Naive thymus-derived CD4-positive, alpha-beta T cell (primary cell): ENCODE measurements at regions of chr15 and their contacts with region 1.

Region 1: GRCh38 chr15:72783563-72784237 is at the start of gene ADPGK:
- DNase-seq: peak; percentile 90 to 100 (median 97)
- ATAC-seq: peak; percentile 90
- H3K4me3 ChIP-seq: peak within 1 kb of the TSS; percentile 87
- H3K4me3 Mint-ChIP-seq: peak within 1 kb of the TSS; percentile 87 to 98 (median 95)
- H3K27ac ChIP-seq: peak within 1 kb of the TSS; percentile 89
- H3K27ac Mint-ChIP-seq: peak within 1 kb of the TSS; percentile 95 to 99 (median 98)
- H3K4me1 ChIP-seq: peaks cover 19 to 39% of the 10 kb centered on the region in 2 donors
- H3K4me1 Mint-ChIP-seq: peaks cover 31 to 56% (median 49%) of the 10 kb centered on the region in 7 donors
- H3K27me3 ChIP-seq: no peaks in the 10 kb centered on the region
- H3K27me3 Mint-ChIP-seq: no peaks in the 10 kb centered on the region
- total RNA-seq, gene ADPGK: 96.2 to 129 (median 98.2) TPM

Region 2: GRCh38 chr15:72117486-72118399 is 666.0 kb before region 1 on chr15 and contains the start of gene MYO9A:
- CTCF ChIA-PET with region 1: no interaction called
- POLR2A ChIA-PET with region 1: no interaction called
- intact Hi-C with region 1: loop called in 1 of 2 experiments (anchors 1 kb)
- DNase-seq: peak; percentile 93 to 99 (median 98)
- ATAC-seq: peak; percentile 90
- H3K4me3 ChIP-seq: peak within 1 kb of the TSS; percentile 86
- H3K4me3 Mint-ChIP-seq: peak within 1 kb of the TSS; percentile 89 to 99 (median 97)
- H3K27ac ChIP-seq: peak within 1 kb of the TSS; percentile 94
- H3K27ac Mint-ChIP-seq: peak within 1 kb of the TSS; percentile 81 to 99 (median 99)
- H3K4me1 ChIP-seq: peaks cover 7 to 11% of the 10 kb centered on the region in 2 donors
- H3K4me1 Mint-ChIP-seq: peaks cover 23 to 55% (median 47%) of the 10 kb centered on the region in 7 donors
- H3K27me3 ChIP-seq: no peaks in the 10 kb centered on the region
- H3K27me3 Mint-ChIP-seq: peaks cover 0 to 23% (median 0%) of the 10 kb centered on the region in 5 donors
- total RNA-seq, gene MYO9A: 21.6 to 53.3 (median 29.7) TPM

Region 3: DNA sequence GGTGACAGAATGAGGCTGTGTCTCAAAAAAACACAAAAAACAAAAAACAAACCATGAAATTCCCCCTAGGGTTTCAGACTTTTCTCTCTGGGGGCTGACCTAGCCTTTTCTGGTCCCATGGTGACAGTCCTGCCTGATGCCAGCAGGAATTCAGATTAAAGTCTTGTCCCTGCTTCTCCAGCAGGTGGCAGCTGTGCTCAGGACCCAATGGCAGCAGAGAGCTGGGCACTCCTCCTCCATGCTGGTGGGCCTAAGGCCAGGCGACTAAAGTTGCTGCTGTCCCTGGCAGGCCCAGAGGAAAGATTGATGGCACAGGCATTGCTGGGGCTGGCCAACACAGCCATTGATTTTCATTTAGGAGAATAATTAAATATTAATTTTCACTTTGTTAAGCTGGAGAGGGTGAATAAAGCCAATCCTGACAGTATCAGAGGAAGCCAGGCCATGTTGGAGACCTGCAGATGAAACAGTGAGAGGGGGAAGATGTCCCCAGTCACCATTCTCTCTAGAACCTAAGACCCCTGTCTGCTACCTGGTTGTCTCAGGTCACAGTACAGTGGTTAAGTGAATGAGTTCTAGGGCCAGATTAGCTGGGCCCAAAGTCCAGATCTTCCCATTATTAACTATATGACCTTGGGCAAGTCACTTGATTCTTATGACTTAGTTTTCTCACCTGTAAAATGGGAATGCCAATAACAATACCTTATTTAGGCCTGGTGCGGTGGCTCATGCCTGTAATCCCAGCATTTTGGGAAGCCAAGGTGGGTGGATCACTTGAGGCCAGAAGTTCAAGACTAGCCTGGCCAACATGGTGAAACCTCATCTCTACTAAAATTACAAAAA is 470.9 kb before region 1 on chr15:
- CTCF ChIA-PET with region 1: no interaction called
- POLR2A ChIA-PET with region 1: no interaction called
- intact Hi-C with region 1: loop called in 1 of 2 experiments (anchors 10 kb)
- DNase-seq: peak; percentile 22 to 54 (median 43)
- ATAC-seq: peak; percentile 93
- H3K4me3 ChIP-seq: no peak overlapping the region
- H3K4me3 Mint-ChIP-seq: no peak overlapping the region
- H3K27ac ChIP-seq: no peak overlapping the region
- H3K27ac Mint-ChIP-seq: no peak overlapping the region
- H3K4me1 ChIP-seq: no peaks in the 10 kb centered on the region
- H3K4me1 Mint-ChIP-seq: peaks cover 0 to 2% (median 0%) of the 10 kb centered on the region in 7 donors
- H3K27me3 ChIP-seq: no peaks in the 10 kb centered on the region
- H3K27me3 Mint-ChIP-seq: peaks cover 0 to 7% (median 0%) of the 10 kb centered on the region in 5 donors

Region 4: GRCh38 chr15:72685925-72686794 is 97.5 kb before region 1 on chr15 and contains the starts of genes BBS4 and HIGD2B:
- CTCF ChIA-PET with region 1: no interaction called
- POLR2A ChIA-PET with region 1: interaction called, 3 read pairs
- intact Hi-C with region 1: loop called (anchors 1 kb)
- DNase-seq: peak; percentile 67 to 88 (median 84)
- ATAC-seq: peak; percentile 97
- H3K4me3 ChIP-seq: peak within 1 kb of the TSS; percentile 99
- H3K4me3 Mint-ChIP-seq: peak within 1 kb of the TSS; percentile 93 to 99 (median 98)
- H3K27ac ChIP-seq: peak within 1 kb of the TSS; percentile 82
- H3K27ac Mint-ChIP-seq: peak within 1 kb of the TSS; percentile 91 to 98 (median 96)
- H3K4me1 ChIP-seq: peaks cover 0 to 5% of the 10 kb centered on the region in 2 donors
- H3K4me1 Mint-ChIP-seq: peaks cover 8 to 25% (median 20%) of the 10 kb centered on the region in 7 donors
- H3K27me3 ChIP-seq: no peaks in the 10 kb centered on the region
- H3K27me3 Mint-ChIP-seq: peaks cover 0 to under 1% (median 0%) of the 10 kb centered on the region in 5 donors
- total RNA-seq, gene BBS4: 11.9 to 26.5 (median 16.2) TPM
- total RNA-seq, gene HIGD2B: 0.57 to 0.69 (median 0.64) TPM in 3 of 5 experiments, not detected in the others

Region 5: GRCh38 chr15:73051811-73052678 is 268.3 kb after region 1 on chr15 and contains the start of gene NEO1:
- CTCF ChIA-PET with region 1: no interaction called
- POLR2A ChIA-PET with region 1: interaction called, 10 read pairs
- intact Hi-C with region 1: loop called (anchors 1 to 2 kb)
- DNase-seq: peak; percentile 71 to 86 (median 84)
- ATAC-seq: peak; percentile 90
- H3K4me3 ChIP-seq: peak within 1 kb of the TSS; percentile 74
- H3K4me3 Mint-ChIP-seq: peak within 1 kb of the TSS; percentile 81 to 95 (median 88)
- H3K27ac ChIP-seq: peak within 1 kb of the TSS; percentile 74
- H3K27ac Mint-ChIP-seq: peak within 1 kb of the TSS; percentile 36 to 88 (median 62)
- H3K4me1 ChIP-seq: peaks cover 8 to 11% of the 10 kb centered on the region in 2 donors
- H3K4me1 Mint-ChIP-seq: peaks cover 4 to 14% (median 11%) of the 10 kb centered on the region in 7 donors
- H3K27me3 ChIP-seq: no peaks in the 10 kb centered on the region
- H3K27me3 Mint-ChIP-seq: peaks cover 0 to 37% (median 0%) of the 10 kb centered on the region in 5 donors
- total RNA-seq, gene NEO1: 4.4 to 9.5 (median 6.9) TPM

Region 6: DNA sequence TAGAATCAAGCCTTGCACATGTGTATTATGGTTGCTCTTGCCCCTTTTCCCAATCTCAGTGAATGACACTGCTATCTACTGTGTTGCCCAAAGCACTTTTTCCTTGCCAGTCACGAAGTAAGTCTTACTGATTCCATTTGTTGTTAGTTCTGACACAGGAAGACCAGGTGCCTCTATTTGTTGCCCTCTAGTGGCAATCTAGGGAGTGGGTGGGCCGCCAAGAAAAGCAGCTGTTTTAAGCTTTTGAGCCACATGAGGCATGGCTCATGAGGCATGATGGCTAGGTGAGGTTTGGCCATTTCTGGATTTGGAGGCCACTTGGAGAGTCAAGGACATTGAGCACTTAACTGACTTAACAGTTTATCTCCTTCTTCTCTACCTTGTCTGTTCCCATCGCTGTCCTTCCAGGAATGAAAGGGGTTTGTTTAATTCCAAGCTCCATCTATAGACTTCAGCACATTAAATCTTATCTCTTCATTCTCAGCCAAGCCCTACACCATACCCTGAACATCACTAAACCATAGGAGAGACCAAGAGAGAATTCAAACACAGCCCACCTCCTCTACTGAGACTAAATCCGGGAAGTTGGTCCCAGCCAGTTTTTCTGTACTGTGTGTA is 481.9 kb after region 1 on chr15:
- CTCF ChIA-PET with region 1: no interaction called
- POLR2A ChIA-PET with region 1: no interaction called
- intact Hi-C with region 1: loop called in 1 of 2 experiments (anchors 2 kb)
- DNase-seq: peak in 8 of 9 donors; percentile 8 to 46 (median 35)
- ATAC-seq: peak; percentile 73
- H3K4me3 ChIP-seq: no peak overlapping the region
- H3K4me3 Mint-ChIP-seq: no peak overlapping the region
- H3K27ac ChIP-seq: no peak overlapping the region
- H3K27ac Mint-ChIP-seq: peak overlapping the region in 1 of 9 donors; percentile 1
- H3K4me1 ChIP-seq: no peaks in the 10 kb centered on the region
- H3K4me1 Mint-ChIP-seq: peaks cover 0 to 4% (median 0%) of the 10 kb centered on the region in 7 donors
- H3K27me3 ChIP-seq: no peaks in the 10 kb centered on the region
- H3K27me3 Mint-ChIP-seq: no peaks in the 10 kb centered on the region

Region 7: GRCh38 chr15:73991726-73992593 is 1208.3 kb after region 1 on chr15 and contains the start of gene STOML1:
- CTCF ChIA-PET with region 1: no interaction called
- POLR2A ChIA-PET with region 1: no interaction called
- intact Hi-C with region 1: loop called in 1 of 2 experiments (anchors 5 kb)
- DNase-seq: peak; percentile 85 to 99 (median 91)
- ATAC-seq: peak; percentile 91
- H3K4me3 ChIP-seq: peak within 1 kb of the TSS; percentile 68
- H3K4me3 Mint-ChIP-seq: peak within 1 kb of the TSS; percentile 82 to 100 (median 98)
- H3K27ac ChIP-seq: peak within 1 kb of the TSS; percentile 90
- H3K27ac Mint-ChIP-seq: peak within 1 kb of the TSS; percentile 72 to 99 (median 87)
- H3K4me1 ChIP-seq: peaks cover 33 to 35% of the 10 kb centered on the region in 2 donors
- H3K4me1 Mint-ChIP-seq: peaks cover 28 to 62% (median 49%) of the 10 kb centered on the region in 7 donors
- H3K27me3 ChIP-seq: no peaks in the 10 kb centered on the region
- H3K27me3 Mint-ChIP-seq: no peaks in the 10 kb centered on the region
- total RNA-seq, gene STOML1: 7.5 to 14.5 (median 12.3) TPM